AG04450 (cell line): ENCODE measurements at regions of chr1 and their contacts with region 1.

Region 1: DNA sequence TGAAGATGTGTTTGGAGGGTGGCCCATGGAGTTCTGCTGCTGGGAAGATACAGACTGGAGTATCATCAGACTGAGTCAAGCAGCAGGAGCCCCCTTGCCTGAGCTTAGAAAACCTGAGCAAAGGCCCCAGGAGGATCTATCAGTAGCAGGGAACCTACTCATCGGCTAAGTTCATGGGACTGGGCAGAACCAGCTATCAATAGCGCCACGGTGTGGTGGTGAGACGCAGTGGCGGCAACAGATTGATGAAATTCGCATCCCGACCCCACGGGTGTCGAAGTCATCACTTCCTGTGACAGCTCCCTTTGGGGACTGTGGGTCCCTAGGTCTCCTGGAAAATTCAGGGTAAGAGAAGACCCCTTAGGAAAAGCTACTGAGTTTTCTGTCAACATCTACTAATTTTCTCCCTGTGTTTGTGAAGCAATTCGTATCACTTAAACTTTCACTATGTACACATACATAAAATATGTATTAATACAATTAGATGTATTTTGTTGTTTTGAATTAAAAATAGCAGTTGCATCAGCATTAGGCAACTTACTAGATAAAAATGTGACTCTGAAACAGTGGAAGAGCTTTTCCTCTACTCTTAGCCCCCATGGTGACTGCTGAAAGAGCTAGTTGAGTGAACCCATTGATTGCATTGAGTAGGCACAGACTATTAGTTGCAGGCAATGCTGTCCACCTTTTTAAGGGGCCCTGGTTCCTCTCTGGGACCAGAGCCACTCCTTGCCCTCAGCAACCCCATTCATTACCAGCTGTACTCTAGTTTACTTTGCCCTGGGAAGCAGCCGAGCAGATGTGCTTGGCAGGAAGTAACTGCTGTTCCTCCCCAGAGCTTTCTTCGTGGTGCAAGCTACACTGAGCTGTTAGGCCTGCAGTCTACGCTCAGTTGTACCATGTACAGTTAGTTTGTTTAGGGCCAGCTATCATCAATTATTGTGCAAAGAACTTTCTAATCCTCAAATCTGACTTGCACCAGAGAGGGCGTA is 7.3 kb upstream of the CACNA1S start:
- DNase-seq: no peak
- H3K4me3 ChIP-seq: no peak overlapping the region
- H3K27ac ChIP-seq: no peak overlapping the region
- H3K27me3 ChIP-seq: peaks cover 61% of the 10 kb centered on the region
- CTCF ChIP-seq: peak; percentile 58

Region 2: DNA sequence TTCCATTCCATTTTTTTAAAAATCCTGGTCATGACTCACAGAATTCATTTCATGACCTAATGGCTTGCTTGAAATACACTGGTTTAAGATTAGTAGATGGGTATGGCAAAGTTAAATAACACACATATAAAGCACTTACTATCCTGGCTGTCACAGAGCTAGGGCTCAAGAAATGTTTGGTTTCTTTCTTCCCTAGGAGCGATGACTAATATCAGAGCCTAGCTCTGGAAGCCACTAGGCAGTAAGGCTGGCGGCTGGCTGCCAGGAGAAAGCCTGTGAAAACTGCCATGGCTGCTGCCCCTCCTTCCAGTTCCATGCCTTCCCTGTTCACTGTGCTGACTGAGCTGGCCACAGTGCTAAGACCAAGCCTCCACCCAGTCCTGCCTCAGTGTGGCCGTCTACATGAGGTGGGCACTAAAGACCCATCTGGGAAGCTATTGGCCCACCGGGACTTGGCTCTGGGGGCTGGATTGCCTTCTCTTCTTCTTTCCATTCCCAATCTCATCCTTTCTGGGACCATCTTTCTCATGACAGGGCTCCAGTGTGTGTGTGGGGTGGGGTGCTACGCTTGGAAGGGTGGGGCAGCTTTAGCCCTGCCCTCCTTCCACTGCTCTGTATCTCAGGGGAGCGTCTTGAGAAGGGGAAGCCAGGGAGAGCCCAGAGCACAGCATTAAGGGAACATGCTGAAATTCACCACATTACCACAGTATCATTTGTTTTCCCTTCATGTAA is 18.2 kb after region 1 on chr1:
- CTCF ChIA-PET with region 1: interaction called, 18 read pairs
- POLR2A ChIA-PET with region 1: no interaction called
- DNase-seq: peak; percentile 79
- H3K4me3 ChIP-seq: no peak overlapping the region
- H3K27ac ChIP-seq: peak overlapping the region; percentile 60
- H3K27me3 ChIP-seq: no peaks in the 10 kb centered on the region
- CTCF ChIP-seq: no peak